Right lobe of liver (tissue), 6 donors: ENCODE measurements at regions of chr1 and their contacts with region 1.

Region 1: DNA sequence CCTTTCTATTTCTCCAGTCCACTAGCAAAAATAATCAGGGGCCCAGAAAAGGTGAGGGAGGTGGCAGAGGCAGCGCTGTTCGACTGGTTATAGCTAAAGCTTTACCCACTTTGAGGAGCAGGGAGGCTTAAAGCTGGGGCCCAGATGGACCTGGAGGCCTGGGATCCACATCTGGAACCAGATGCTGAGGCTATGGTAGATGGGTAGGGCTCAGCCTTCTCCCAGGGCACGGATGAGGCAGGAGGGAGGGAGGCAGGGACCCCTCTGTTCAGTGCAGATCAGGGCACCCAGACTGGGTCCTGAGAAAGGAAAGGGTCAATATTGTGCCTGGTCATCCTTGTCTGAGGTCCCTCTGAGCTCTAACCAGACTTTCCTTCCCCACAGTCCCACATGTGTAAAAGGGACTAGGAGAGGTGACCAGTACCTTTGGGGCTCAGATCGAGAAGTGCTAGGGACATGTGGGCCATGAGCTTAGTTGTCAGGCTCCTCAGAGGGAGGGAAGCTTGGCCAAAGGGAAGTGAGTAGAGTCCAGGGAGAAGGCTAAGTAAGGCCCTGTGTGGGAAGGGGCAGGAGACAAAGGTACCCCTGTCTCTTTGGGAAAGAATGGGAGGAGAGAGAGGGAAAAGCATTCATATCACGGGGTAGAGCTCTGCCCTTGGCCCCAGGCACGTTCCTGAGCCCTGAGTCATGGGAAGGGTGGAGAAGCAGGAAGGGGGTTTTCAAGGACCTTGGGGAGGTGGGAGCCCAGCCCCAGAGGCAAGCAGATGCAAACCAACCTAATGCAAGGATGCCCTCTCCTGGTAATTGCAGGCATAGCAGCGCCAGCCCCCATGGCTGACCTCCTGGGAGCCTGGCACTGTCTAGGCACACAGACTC is 15.4 kb downstream of the LMNA start:
- DNase-seq: peak in 2 of 3 donors; percentile 67 to 71
- ATAC-seq: peak; percentile 76 to 86 (median 80)
- H3K4me3 ChIP-seq: no peak overlapping the region
- H3K27ac ChIP-seq: peak overlapping the region; percentile 58 to 79 (median 72)
- H3K4me1 ChIP-seq: peaks cover 0 to 29% (median 17%) of the 10 kb centered on the region in 4 donors
- H3K27me3 ChIP-seq: no peaks in the 10 kb centered on the region
- CTCF ChIP-seq: peak; percentile 96 to 98 (median 97)
- POLR2A ChIP-seq: peak; percentile 8

Region 2: DNA sequence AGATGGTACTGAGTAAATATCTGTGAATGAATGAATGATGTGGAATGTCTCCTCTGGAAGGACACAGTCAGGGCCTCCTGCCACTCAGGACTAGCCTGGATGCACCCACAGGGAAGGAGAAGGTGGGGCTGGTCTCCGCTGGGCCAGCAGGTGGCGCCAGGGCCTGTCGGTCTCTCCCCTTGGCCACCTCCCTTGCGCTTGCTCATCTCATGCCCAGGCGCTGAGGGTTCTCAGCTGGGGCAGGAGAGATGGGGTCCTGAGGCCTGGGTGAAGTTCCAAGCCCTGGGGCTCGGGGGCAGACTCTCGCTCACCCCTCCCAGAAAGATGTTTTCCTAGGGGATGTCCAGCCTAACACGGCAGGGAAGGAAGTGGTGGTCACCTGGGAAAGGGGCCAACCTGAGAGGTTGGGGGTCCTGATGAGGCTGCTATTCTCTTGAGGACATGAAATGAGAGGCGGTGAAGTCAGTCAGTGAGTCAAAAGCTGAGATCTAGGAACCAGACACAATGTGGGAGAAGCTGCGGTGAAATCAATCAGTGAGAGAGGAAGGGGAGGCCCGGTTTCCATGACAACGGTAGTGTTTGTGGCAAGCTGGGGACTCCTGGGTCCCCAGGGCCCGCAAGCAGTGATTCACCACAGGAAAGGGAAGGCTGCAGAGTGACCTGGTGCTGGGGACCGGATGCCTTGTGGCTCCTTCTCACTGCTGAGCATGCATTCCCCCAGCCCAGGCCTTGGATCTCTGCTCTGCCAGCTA is 33.1 kb before region 1 on chr1:
- intact Hi-C with region 1: loop called (anchors 2 to 5 kb)
- DNase-seq: peak; percentile 87 to 88 (median 87)
- ATAC-seq: peak; percentile 96 to 99 (median 98)
- H3K4me3 ChIP-seq: no peak overlapping the region
- H3K27ac ChIP-seq: no peak overlapping the region
- H3K4me1 ChIP-seq: peaks cover 0 to 7% (median under 1%) of the 10 kb centered on the region in 4 donors
- H3K27me3 ChIP-seq: no peaks in the 10 kb centered on the region
- CTCF ChIP-seq: peak; percentile 93 to 98 (median 98)
- POLR2A ChIP-seq: no peak

Region 3: DNA sequence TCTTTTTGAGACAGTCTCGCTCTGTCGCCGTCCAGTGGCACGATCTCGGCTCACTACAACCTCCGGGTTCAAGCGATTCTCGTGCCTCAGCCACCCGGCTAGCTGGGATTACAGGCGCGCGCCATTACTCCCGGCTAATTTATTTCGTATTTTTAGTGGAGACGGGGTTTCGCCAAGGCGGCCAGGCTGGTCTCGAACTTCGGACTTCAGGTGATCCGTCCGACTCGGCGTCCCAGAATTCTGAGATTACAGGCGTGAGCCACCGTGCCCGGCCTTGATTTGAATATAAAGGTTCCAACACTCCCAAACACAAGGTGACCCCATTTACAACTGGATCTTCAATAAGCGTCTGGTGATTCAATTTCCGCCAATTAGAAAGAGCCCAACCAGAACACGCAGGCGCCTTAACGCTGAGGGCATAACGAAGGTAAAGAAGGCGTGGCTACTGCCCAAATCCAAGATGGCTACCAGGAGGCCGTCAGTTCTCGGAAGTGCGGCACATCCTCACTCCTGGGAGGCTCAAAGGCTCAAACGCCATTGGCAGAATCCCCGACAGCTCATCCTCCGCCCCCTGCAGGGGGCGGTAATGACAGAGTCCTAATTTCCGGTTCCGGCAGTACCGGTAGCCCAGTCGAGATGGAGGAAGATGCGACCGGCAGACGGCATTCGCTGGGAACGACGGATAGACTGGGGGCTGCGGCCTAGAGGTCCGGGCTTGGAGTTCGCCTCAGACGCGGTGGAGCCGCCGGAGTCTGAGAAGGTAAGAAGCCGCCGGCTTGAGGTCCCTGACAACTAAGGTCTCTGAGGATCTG is 63.8 kb after region 1 on chr1 and contains the start of gene SLC25A44:
- intact Hi-C with region 1: no loop called
- DNase-seq: peak; percentile 94 to 97 (median 97)
- ATAC-seq: peak; percentile 89 to 95 (median 92)
- H3K4me3 ChIP-seq: peak within 1 kb of the TSS; percentile 85 to 92 (median 91)
- H3K27ac ChIP-seq: peak within 1 kb of the TSS; percentile 79 to 85 (median 84)
- H3K4me1 ChIP-seq: peaks cover 0 to 56% (median 19%) of the 10 kb centered on the region in 4 donors
- H3K27me3 ChIP-seq: no peaks in the 10 kb centered on the region
- CTCF ChIP-seq: peak; percentile 56 to 84 (median 70)
- POLR2A ChIP-seq: peak; percentile 83
- total RNA-seq, gene SLC25A44: 19.1 to 30.5 (median 20.0) TPM

Region 4: GRCh38 chr1:156245451-156246232 is 115.7 kb after region 1 on chr1:
- intact Hi-C with region 1: loop called in 1 of 2 experiments (anchors 10 kb)
- DNase-seq: peak in 1 of 3 donors; percentile 42
- ATAC-seq: peak; percentile 6 to 42 (median 30)
- H3K4me3 ChIP-seq: peak overlapping the region in 1 of 3 donors; percentile 21
- H3K27ac ChIP-seq: no peak overlapping the region
- H3K4me1 ChIP-seq: peaks cover 0 to 10% (median 0%) of the 10 kb centered on the region in 4 donors
- H3K27me3 ChIP-seq: no peaks in the 10 kb centered on the region
- CTCF ChIP-seq: no peak
- POLR2A ChIP-seq: no peak